GM18951 (cell line): ENCODE measurements at regions of chr5 and their contacts with region 1.

Region 1: GRCh38 chr5:112757468-112758208 is 20.0 kb downstream of the APC start:
- POLR2A ChIP-seq: no peak

Region 2: GRCh38 chr5:112160652-112161391 is 596.8 kb before region 1 on chr5:
- in situ Hi-C with region 1: loop called (anchors 25 kb)
- POLR2A ChIP-seq: peak; percentile 96

Region 3: DNA sequence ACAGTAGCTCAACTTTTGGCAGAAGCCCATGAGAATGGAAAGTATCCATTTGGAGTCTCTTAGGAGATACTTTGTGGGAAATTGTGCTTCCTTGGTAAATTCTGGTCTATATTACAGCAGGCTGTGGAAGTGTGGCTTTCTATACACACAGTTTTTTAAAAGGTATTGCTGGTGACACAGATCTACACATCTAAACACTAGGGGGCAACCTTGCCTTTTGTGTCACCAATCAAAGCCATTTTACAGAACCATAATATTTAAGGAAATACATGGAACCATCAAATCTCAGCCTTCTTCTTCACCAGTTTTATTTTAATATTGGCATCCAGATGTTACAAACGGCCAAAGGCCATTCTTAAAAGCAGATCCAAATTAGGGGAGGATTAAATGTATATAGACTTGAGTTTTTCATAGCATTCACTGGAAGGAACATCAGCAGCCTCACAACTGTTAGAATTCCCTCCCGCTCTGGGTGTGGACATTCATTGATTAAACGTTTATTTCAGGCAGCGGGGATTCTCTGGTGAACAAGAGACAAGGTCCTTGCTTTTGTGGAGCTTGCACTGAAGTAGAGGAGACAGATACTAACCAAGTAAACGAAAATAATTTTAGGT is 206.1 kb before region 1 on chr5:
- in situ Hi-C with region 1: loop called (anchors 10 kb)
- POLR2A ChIP-seq: no peak

Region 4: GRCh38 chr5:112707187-112708102 is 50.2 kb before region 1 on chr5:
- in situ Hi-C with region 1: no loop called
- POLR2A ChIP-seq: peak; percentile 98

Region 5: DNA sequence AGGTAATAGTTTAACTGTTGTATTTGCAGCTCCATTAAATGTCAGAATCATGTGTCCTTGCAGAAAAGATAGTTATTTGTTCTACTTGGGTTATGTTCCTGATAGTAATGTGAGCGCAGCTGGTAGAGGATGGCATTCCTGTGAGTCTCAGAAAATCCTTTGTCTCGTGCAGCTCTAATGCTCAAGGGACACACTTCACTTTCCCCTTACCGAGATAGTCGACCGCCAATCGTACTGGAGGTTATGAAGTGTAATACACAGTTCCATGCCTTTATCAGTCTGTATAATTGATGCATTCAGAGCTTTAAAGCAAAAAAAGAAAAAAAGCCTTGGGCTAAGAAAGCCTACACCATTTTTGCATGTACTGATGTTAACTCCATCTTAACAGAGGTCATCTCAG is 43.3 kb after region 1 on chr5:
- in situ Hi-C with region 1: no loop called
- POLR2A ChIP-seq: no peak